ENCODE measurements at regions of chr20 and their contacts with region 1.

Region 1: DNA sequence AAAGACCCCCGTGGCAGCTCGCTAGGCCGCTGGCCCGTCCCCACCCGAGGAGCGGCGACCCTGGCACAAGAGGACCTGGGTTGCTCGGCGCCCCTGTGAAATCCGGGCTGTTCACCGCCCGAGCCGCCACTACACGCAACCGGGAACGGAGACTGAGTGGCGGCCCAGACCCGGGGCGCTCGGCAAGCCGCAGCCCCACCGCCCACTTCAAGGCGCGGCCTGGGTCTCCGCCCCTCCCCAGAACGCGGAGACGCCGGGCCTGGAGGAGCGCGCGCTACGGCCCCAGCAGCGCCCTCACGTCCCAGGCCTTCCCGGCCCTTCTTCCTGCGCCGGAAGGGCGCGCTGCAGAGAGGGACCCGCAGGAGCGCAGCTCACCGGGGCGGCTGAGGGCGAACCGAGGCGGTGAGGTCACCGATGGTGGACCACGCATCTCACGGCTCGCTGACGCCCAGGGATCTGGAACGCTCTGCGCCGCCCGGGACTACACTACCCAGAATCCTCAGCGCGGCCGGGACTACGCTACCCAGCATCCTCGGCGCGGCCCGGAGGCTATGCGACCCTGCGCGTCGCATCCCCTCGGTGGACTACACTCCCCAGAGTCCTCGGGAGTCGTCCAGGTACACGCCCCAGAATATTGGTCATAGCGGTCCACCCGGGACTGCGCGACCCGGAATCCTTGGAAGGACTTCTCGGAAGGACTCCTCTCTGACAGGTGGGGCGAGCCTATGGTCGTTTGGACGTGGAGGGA is at the start of gene ZNF337:
- DNase-seq: peak; percentile 96
- H3K4me3 Mint-ChIP-seq: peak within 1 kb of the TSS; percentile 93
- H3K27ac Mint-ChIP-seq: peak within 1 kb of the TSS; percentile 81
- H3K4me1 Mint-ChIP-seq: peaks cover 26% of the 10 kb centered on the region
- H3K27me3 Mint-ChIP-seq: no peaks in the 10 kb centered on the region
- total RNA-seq, gene ZNF337: 12.2 to 12.6 TPM

Region 2: DNA sequence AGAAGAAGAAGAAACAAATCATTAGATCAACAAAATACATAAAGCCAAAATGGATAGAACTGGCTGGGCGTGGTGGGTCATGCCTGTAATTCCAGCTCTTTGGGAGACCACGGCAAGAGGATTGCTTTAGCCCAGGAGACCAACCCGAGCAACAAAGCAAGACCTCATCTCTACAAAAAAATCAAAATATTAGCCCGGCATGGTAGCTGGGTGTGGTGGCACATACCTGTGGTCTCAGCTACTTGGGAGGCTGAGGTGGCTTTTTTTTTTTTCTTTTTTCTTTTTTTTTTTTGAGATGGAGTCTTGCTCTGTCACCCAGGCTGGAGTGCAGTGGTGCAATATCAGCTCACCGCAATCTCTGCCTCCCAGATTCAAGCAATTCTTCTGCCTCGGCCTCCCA is 132.7 kb before region 1 on chr20:
- CTCF ChIA-PET with region 1: no interaction called
- intact Hi-C with region 1: no loop called
- DNase-seq: no peak
- H3K4me3 Mint-ChIP-seq: no peak overlapping the region
- H3K27ac Mint-ChIP-seq: no peak overlapping the region
- H3K4me1 Mint-ChIP-seq: peaks cover 18% of the 10 kb centered on the region
- H3K27me3 Mint-ChIP-seq: no peaks in the 10 kb centered on the region

Region 3: GRCh38 chr20:25584905-25585704 is 111.5 kb before region 1 on chr20 and contains the start of gene NINL:
- CTCF ChIA-PET with region 1: no interaction called
- intact Hi-C with region 1: loop called (anchors 1 kb)
- DNase-seq: peak; percentile 60
- H3K4me3 Mint-ChIP-seq: peak within 1 kb of the TSS; percentile 74
- H3K27ac Mint-ChIP-seq: no peak within 1 kb of the TSS
- H3K4me1 Mint-ChIP-seq: peaks cover 6% of the 10 kb centered on the region
- H3K27me3 Mint-ChIP-seq: peaks cover 4% of the 10 kb centered on the region
- total RNA-seq, gene NINL: 2.6 to 2.9 TPM

Region 4: GRCh38 chr20:25706793-25707192 is 10.2 kb after region 1 on chr20:
- CTCF ChIA-PET with region 1: no interaction called
- intact Hi-C with region 1: loop called (anchors 1 kb)
- DNase-seq: peak; percentile 63
- H3K4me3 Mint-ChIP-seq: peak overlapping the region; percentile 41
- H3K27ac Mint-ChIP-seq: peak overlapping the region; percentile 66
- H3K4me1 Mint-ChIP-seq: peaks cover 18% of the 10 kb centered on the region
- H3K27me3 Mint-ChIP-seq: no peaks in the 10 kb centered on the region

Region 5: GRCh38 chr20:25750765-25751696 is 54.5 kb after region 1 on chr20:
- CTCF ChIA-PET with region 1: no interaction called
- intact Hi-C with region 1: loop called (anchors 1 kb)
- DNase-seq: peak; percentile 76
- H3K4me3 Mint-ChIP-seq: peak overlapping the region; percentile 86
- H3K27ac Mint-ChIP-seq: peak overlapping the region; percentile 77
- H3K4me1 Mint-ChIP-seq: peaks cover 15% of the 10 kb centered on the region
- H3K27me3 Mint-ChIP-seq: no peaks in the 10 kb centered on the region

Measured in activated naive CD4-positive, alpha-beta T cell treated with anti-CD3 and anti-CD28 coated beads for 36 hours (primary cell).